ENCODE measurements at regions of chr1 and their contacts with region 1.

Region 1: GRCh38 chr1:150053926-150054325 is 13.7 kb upstream of the VPS45 start:
- DNase-seq: no peak
- H3K4me3 ChIP-seq: no peak overlapping the region
- H3K27ac ChIP-seq: no peak overlapping the region
- H3K4me1 ChIP-seq: peaks cover 18% of the 10 kb centered on the region; the same call in 1 of the 2 replicates
- H3K27me3 ChIP-seq: no peaks in the 10 kb centered on the region
- CTCF ChIP-seq: no peak

Region 2: GRCh38 chr1:149962123-149962548 is 91.8 kb before region 1 on chr1:
- CTCF ChIA-PET with region 1: interaction called, 10 read pairs
- POLR2A ChIA-PET with region 1: no interaction called
- intact Hi-C with region 1: loop called (anchors 1 kb)
- DNase-seq: peak; percentile 44 to 69
- H3K4me3 ChIP-seq: no peak overlapping the region
- H3K27ac ChIP-seq: peak overlapping the region; percentile 52
- H3K4me1 ChIP-seq: peaks cover 7% of the 10 kb centered on the region
- H3K27me3 ChIP-seq: no peaks in the 10 kb centered on the region
- CTCF ChIP-seq: peak; percentile 83

Region 3: GRCh38 chr1:151222130-151222529 is 1168.2 kb after region 1 on chr1:
- CTCF ChIA-PET with region 1: no interaction called
- POLR2A ChIA-PET with region 1: interaction called, 10 read pairs
- intact Hi-C with region 1: no loop called
- DNase-seq: no peak
- H3K4me3 ChIP-seq: no peak overlapping the region
- H3K27ac ChIP-seq: no peak overlapping the region
- H3K4me1 ChIP-seq: no peaks in the 10 kb centered on the region
- H3K27me3 ChIP-seq: no peaks in the 10 kb centered on the region
- CTCF ChIP-seq: no peak